ENCODE measurements at regions of chr2 and their contacts with region 1.

Region 1: GRCh38 chr2:218898109-218898878 is 17.6 kb downstream of the WNT10A start:
- DNase-seq: peak; percentile 88
- H3K4me3 Mint-ChIP-seq: peak overlapping the region; percentile 58
- H3K27ac Mint-ChIP-seq: peak overlapping the region; percentile 72
- H3K4me1 Mint-ChIP-seq: peaks cover 43% of the 10 kb centered on the region
- H3K27me3 Mint-ChIP-seq: peaks cover 16% of the 10 kb centered on the region

Region 2: GRCh38 chr2:218659258-218659987 is 238.9 kb before region 1 on chr2 and contains the starts of genes BCS1L and ZNF142:
- CTCF ChIA-PET with region 1: interaction called, 9 read pairs
- POLR2A ChIA-PET with region 1: interaction called, 3 read pairs
- intact Hi-C with region 1: loop called (anchors 1 kb)
- DNase-seq: peak; percentile 98
- H3K4me3 Mint-ChIP-seq: peak within 1 kb of the TSS; percentile 93
- H3K27ac Mint-ChIP-seq: peak within 1 kb of the TSS; percentile 80
- H3K4me1 Mint-ChIP-seq: peaks cover 26% of the 10 kb centered on the region
- H3K27me3 Mint-ChIP-seq: no peaks in the 10 kb centered on the region
- total RNA-seq, gene BCS1L: 57.1 to 64.5 TPM
- total RNA-seq, gene ZNF142: 33.7 to 34.8 TPM

Region 3: DNA sequence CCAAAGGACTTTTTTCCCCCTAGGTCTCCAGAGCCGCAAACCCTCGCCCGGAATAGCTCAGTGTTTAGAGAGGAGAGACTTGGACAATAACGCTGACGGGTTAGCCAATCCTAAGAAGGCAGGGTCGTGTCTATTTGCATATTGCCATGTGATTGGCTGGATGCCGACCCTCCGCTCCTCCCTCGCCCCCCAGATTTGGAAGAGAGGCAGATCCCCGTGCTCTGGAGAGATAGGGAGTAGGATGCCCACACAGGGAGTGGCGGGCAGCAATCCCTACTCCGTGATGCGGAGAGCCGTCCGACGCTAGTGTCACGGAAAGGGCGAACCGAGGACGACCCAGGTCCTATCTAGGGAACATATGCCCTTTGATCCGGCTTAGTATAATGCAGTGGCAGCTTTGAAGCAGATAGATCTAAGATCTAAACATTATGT is 37.3 kb before region 1 on chr2:
- CTCF ChIA-PET with region 1: interaction called, 39 read pairs
- POLR2A ChIA-PET with region 1: no interaction called
- intact Hi-C with region 1: no loop called
- DNase-seq: peak; percentile 7
- H3K4me3 Mint-ChIP-seq: no peak overlapping the region
- H3K27ac Mint-ChIP-seq: no peak overlapping the region
- H3K4me1 Mint-ChIP-seq: peaks cover 15% of the 10 kb centered on the region
- H3K27me3 Mint-ChIP-seq: peaks cover 67% of the 10 kb centered on the region

Region 4: GRCh38 chr2:218959141-218959731 is 60.9 kb after region 1 on chr2 and contains the start of gene CDK5R2:
- CTCF ChIA-PET with region 1: interaction called, 10 read pairs
- POLR2A ChIA-PET with region 1: no interaction called
- intact Hi-C with region 1: no loop called
- DNase-seq: peak; percentile 85
- H3K4me3 Mint-ChIP-seq: peak within 1 kb of the TSS; percentile 48
- H3K27ac Mint-ChIP-seq: no peak within 1 kb of the TSS
- H3K4me1 Mint-ChIP-seq: peaks cover 14% of the 10 kb centered on the region
- H3K27me3 Mint-ChIP-seq: peaks cover 65% of the 10 kb centered on the region
- total RNA-seq, gene CDK5R2: not detected

Region 5: GRCh38 chr2:219278655-219279516 is 380.6 kb after region 1 on chr2 and contains the start of gene DNAJB2:
- CTCF ChIA-PET with region 1: no interaction called
- POLR2A ChIA-PET with region 1: no interaction called
- intact Hi-C with region 1: loop called (anchors 2 kb)
- DNase-seq: peak; percentile 100
- H3K4me3 Mint-ChIP-seq: peak within 1 kb of the TSS; percentile 80
- H3K27ac Mint-ChIP-seq: peak within 1 kb of the TSS; percentile 95
- H3K4me1 Mint-ChIP-seq: peaks cover 43% of the 10 kb centered on the region
- H3K27me3 Mint-ChIP-seq: no peaks in the 10 kb centered on the region
- total RNA-seq, gene DNAJB2: 37.3 to 39.1 TPM